GM12878 (cell line): ENCODE measurements at regions of chr10 and their contacts with region 1.

Region 1: GRCh38 chr10:59625721-59626522 is 83.7 kb downstream of the SLC16A9 start:
- DNase-seq: peak; percentile 35
- ATAC-seq: peak; percentile 96
- H3K4me3 ChIP-seq: no peak overlapping the region
- H3K27ac ChIP-seq: no peak overlapping the region
- H3K4me1 ChIP-seq: no peaks in the 10 kb centered on the region; the same call in 1 of the 2 replicates
- H3K27me3 ChIP-seq: no peaks in the 10 kb centered on the region
- CTCF ChIP-seq: peak; percentile 66 to 93 (median 80); a peak in 5 of 6 replicates
- EP300 ChIP-seq: no peak
- POLR2A ChIP-seq: no peak
- RAD21 ChIP-seq: peak; percentile 100

Region 2: GRCh38 chr10:59240582-59241183 is 385.2 kb before region 1 on chr10:
- CTCF ChIA-PET with region 1: interaction called, 14 read pairs
- POLR2A ChIA-PET with region 1: interaction called, 3 read pairs
- RAD21 ChIA-PET with region 1: no interaction called
- SMC1A ChIA-PET with region 1: interaction called, 5 read pairs
- in situ Hi-C with region 1: no loop called
- intact Hi-C with region 1: loop called (anchors 2 kb)
- DNase-seq: no peak
- ATAC-seq: peak; percentile 31; the same call in 1 of the 3 replicates
- H3K4me3 ChIP-seq: no peak overlapping the region
- H3K27ac ChIP-seq: no peak overlapping the region
- H3K4me1 ChIP-seq: no peaks in the 10 kb centered on the region
- H3K27me3 ChIP-seq: no peaks in the 10 kb centered on the region
- CTCF ChIP-seq: peak; percentile 30 to 50 (median 48); a peak in 4 of 6 replicates
- EP300 ChIP-seq: no peak
- POLR2A ChIP-seq: no peak
- RAD21 ChIP-seq: peak; percentile 64

Region 3: GRCh38 chr10:59830601-59831259 is 204.8 kb after region 1 on chr10:
- CTCF ChIA-PET with region 1: interaction called, 11 read pairs
- POLR2A ChIA-PET with region 1: no interaction called
- RAD21 ChIA-PET with region 1: interaction called, 7 read pairs
- SMC1A ChIA-PET with region 1: interaction called, 5 read pairs
- in situ Hi-C with region 1: no loop called
- intact Hi-C with region 1: loop called (anchors 1 kb)
- DNase-seq: no peak
- ATAC-seq: peak; percentile 53
- H3K4me3 ChIP-seq: no peak overlapping the region
- H3K27ac ChIP-seq: no peak overlapping the region
- H3K4me1 ChIP-seq: peaks cover 34% of the 10 kb centered on the region
- H3K27me3 ChIP-seq: no peaks in the 10 kb centered on the region
- CTCF ChIP-seq: peak; percentile 49 to 71 (median 61)
- EP300 ChIP-seq: no peak
- POLR2A ChIP-seq: no peak
- RAD21 ChIP-seq: peak; percentile 55

Region 4: DNA sequence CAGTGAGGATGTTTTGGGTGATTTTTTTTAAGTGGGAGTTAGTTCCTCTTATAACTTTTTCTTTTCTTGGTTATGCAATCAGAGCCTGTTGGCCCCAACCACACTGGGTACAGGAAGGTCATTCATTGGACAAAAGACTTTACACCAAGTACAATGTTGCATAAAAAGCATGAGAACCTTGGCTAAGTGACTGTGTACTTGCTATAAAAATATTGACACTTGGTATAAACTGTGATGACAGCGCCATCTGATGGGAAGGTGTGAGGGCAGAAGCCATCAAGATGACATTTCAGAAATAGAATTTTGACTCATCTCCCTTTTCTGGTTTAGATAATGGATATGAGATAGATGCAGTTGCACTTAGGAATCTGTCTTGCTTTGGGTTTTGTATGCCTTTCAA is 406.8 kb after region 1 on chr10:
- CTCF ChIA-PET with region 1: interaction called, 38 read pairs
- POLR2A ChIA-PET with region 1: no interaction called
- RAD21 ChIA-PET with region 1: interaction called, 4 read pairs
- SMC1A ChIA-PET with region 1: interaction called, 22 read pairs
- in situ Hi-C with region 1: loop called (anchors 5 kb)
- intact Hi-C with region 1: loop called (anchors 1 kb)
- DNase-seq: peak; percentile 23
- ATAC-seq: peak; percentile 83
- H3K4me3 ChIP-seq: no peak overlapping the region
- H3K27ac ChIP-seq: no peak overlapping the region
- H3K4me1 ChIP-seq: peaks cover 15% of the 10 kb centered on the region
- H3K27me3 ChIP-seq: no peaks in the 10 kb centered on the region; a peak in 1 of 4 replicates
- CTCF ChIP-seq: peak; percentile 56 to 71 (median 68)
- EP300 ChIP-seq: no peak
- POLR2A ChIP-seq: no peak
- RAD21 ChIP-seq: peak; percentile 79

Region 5: DNA sequence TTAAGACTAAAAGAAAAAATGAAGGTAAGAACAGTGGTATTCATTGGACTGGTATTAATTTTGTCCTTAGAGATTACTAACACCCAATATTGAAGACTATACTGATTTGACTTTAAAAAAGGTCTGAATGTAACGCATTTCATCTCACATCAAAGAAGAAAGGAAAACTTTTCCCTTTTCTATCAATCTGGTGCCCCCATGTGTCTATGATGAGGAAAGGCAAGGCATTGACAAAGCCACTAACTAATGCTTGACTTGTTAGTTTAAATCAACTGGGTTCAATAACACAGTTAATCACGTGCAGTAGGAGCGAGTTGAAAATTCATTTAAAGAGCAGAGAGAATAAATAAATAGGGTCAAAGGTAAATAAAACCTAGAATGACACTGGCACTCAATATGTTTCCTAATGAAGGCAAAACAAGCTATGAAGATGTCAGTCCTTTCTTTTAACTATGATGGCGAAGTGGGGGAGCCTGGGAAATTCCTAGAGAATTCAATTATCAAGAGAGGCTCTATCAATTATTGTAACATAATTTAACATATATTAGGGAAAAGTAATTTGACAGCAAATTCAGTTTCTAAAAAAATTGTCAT is 582.9 kb after region 1 on chr10:
- CTCF ChIA-PET with region 1: interaction called, 10 read pairs
- POLR2A ChIA-PET with region 1: no interaction called
- RAD21 ChIA-PET with region 1: interaction called, 9 read pairs
- SMC1A ChIA-PET with region 1: interaction called, 13 read pairs
- in situ Hi-C with region 1: loop called (anchors 10 kb)
- intact Hi-C with region 1: loop called (anchors 1 kb)
- DNase-seq: no peak
- ATAC-seq: peak; percentile 67
- H3K4me3 ChIP-seq: no peak overlapping the region
- H3K27ac ChIP-seq: no peak overlapping the region
- H3K4me1 ChIP-seq: no peaks in the 10 kb centered on the region
- H3K27me3 ChIP-seq: peaks cover 0 to 3% of the 10 kb centered on the region in 2 experiments; a peak in 1 of 4 replicates
- CTCF ChIP-seq: peak; percentile 63 to 68 (median 64); a peak in 5 of 6 replicates
- EP300 ChIP-seq: no peak
- POLR2A ChIP-seq: no peak
- RAD21 ChIP-seq: peak; percentile 86